ENCODE measurements at regions of chr17 and their contacts with region 1.

Region 1: GRCh38 chr17:7484067-7484918 is at the start of gene POLR2A:
- DNase-seq: peak; percentile 97
- ATAC-seq: peak; percentile 64
- H3K4me3 Mint-ChIP-seq: peak within 1 kb of the TSS; percentile 94
- H3K27ac Mint-ChIP-seq: peak within 1 kb of the TSS; percentile 99
- H3K4me1 Mint-ChIP-seq: peaks cover 63% of the 10 kb centered on the region
- H3K27me3 Mint-ChIP-seq: no peaks in the 10 kb centered on the region
- total RNA-seq, gene POLR2A: 183 to 185 TPM

Region 2: GRCh38 chr17:7444682-7445618 is 39.3 kb before region 1 on chr17 and contains the start of gene CHRNB1:
- CTCF ChIA-PET with region 1: interaction called, 78 read pairs
- POLR2A ChIA-PET with region 1: interaction called, 11 read pairs
- DNase-seq: peak; percentile 37
- ATAC-seq: peak; percentile 17
- H3K4me3 Mint-ChIP-seq: peak within 1 kb of the TSS; percentile 63
- H3K27ac Mint-ChIP-seq: peak within 1 kb of the TSS; percentile 61
- H3K4me1 Mint-ChIP-seq: peaks cover 30% of the 10 kb centered on the region
- H3K27me3 Mint-ChIP-seq: peaks cover 28% of the 10 kb centered on the region
- total RNA-seq, gene CHRNB1: 14.1 to 15.7 TPM

Region 3: GRCh38 chr17:7454980-7455379 is 29.3 kb before region 1 on chr17:
- CTCF ChIA-PET with region 1: no interaction called
- POLR2A ChIA-PET with region 1: interaction called, 38 read pairs
- DNase-seq: no peak
- ATAC-seq: no peak
- H3K4me3 Mint-ChIP-seq: peak overlapping the region; percentile 90
- H3K27ac Mint-ChIP-seq: peak overlapping the region; percentile 98
- H3K4me1 Mint-ChIP-seq: peaks cover 32% of the 10 kb centered on the region
- H3K27me3 Mint-ChIP-seq: no peaks in the 10 kb centered on the region

Region 4: GRCh38 chr17:7466639-7467341 is 17.5 kb before region 1 on chr17:
- CTCF ChIA-PET with region 1: interaction called, 7 read pairs
- POLR2A ChIA-PET with region 1: interaction called, 19 read pairs
- DNase-seq: no peak
- ATAC-seq: no peak
- H3K4me3 Mint-ChIP-seq: no peak overlapping the region
- H3K27ac Mint-ChIP-seq: peak overlapping the region; percentile 43
- H3K4me1 Mint-ChIP-seq: peaks cover 27% of the 10 kb centered on the region
- H3K27me3 Mint-ChIP-seq: no peaks in the 10 kb centered on the region

Region 5: GRCh38 chr17:7496470-7497183 is 12.3 kb after region 1 on chr17:
- CTCF ChIA-PET with region 1: no interaction called
- POLR2A ChIA-PET with region 1: interaction called, 15 read pairs
- DNase-seq: no peak
- ATAC-seq: peak; percentile 17
- H3K4me3 Mint-ChIP-seq: no peak overlapping the region
- H3K27ac Mint-ChIP-seq: no peak overlapping the region
- H3K4me1 Mint-ChIP-seq: peaks cover 23% of the 10 kb centered on the region
- H3K27me3 Mint-ChIP-seq: no peaks in the 10 kb centered on the region

Region 6: GRCh38 chr17:7515911-7516610 is 31.8 kb after region 1 on chr17:
- CTCF ChIA-PET with region 1: interaction called, 10 read pairs
- POLR2A ChIA-PET with region 1: interaction called, 3 read pairs
- DNase-seq: no peak
- ATAC-seq: no peak
- H3K4me3 Mint-ChIP-seq: no peak overlapping the region
- H3K27ac Mint-ChIP-seq: no peak overlapping the region
- H3K4me1 Mint-ChIP-seq: peaks cover 4% of the 10 kb centered on the region
- H3K27me3 Mint-ChIP-seq: no peaks in the 10 kb centered on the region

Region 7: DNA sequence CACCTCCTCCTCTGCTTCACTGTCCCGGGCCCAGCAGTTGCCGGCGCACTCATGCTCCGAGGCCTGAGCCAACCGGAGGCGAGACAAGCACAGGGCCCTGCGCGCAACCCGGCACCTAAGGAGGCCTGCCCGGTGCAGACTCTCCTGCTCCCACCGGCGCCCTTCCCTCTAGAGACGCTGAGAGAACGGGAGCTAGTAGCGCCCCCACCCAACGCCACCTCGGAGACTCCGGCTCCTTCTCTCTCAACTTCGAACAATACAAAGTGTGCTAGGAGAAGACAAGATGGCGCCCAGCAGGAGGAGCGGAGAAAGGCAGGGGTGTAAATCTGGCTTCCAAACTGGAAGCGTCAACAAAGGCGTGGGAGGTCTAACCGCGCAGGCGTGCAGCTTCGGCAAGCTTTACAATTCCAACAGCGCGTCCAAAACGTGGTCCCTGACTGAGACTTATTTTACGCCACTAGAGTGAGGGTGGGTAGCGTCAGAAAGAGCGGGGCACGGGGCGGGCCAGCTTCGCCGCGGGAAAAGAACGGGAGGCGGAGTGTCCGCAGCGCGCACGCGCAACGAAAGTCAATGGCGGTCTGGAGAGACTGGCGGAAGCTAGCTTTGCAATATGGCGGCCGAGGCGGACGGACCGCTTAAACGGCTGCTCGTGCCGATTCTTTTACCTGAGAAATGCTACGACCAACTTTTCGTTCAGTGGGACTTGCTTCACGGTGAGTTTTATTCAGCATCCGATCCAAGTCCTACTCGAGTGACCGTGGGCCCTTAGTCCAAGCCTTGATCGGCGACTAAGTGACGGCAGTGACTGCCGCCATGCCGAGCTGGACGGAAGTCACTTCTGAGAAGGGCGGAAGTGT is 99.2 kb after region 1 on chr17 and contains the start of gene MPDU1:
- CTCF ChIA-PET with region 1: interaction called, 3 read pairs
- POLR2A ChIA-PET with region 1: interaction called, 10 read pairs
- DNase-seq: peak; percentile 97
- ATAC-seq: peak; percentile 82
- H3K4me3 Mint-ChIP-seq: peak within 1 kb of the TSS; percentile 98
- H3K27ac Mint-ChIP-seq: peak within 1 kb of the TSS; percentile 100
- H3K4me1 Mint-ChIP-seq: peaks cover 69% of the 10 kb centered on the region
- H3K27me3 Mint-ChIP-seq: no peaks in the 10 kb centered on the region
- total RNA-seq, gene MPDU1: 69.0 to 70.4 TPM